ENCODE measurements at regions of chr18 and their contacts with region 1.

Region 1: DNA sequence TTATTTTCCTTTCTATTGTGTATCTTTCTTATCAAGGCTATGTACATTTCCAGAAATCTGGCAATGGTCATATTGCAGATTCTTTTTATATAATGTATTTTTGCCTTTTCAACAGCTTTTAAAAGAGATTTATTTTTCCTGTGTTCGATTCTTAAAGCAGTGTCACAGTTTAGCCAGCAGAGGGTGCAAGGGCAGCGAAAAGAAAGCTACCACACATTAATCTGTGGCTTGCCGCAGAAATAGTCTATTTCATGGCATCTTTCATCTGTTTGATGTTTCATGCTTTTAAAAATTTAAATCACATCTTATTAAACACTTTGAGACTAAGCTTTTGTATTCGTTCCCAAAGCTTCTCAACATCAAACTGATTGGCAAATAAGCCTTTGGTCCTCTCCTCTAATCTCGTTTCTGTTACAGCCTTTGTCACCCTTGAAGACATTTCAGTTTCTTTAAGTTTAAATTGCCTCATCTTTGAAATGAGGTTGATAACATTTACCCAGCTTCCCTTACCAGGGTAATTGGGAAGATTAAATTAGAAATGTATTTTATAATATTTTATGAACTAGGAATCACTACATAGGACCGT is 73.3 kb downstream of the PIK3C3 start:
- DNase-seq: peak; percentile 47
- H3K4me3 ChIP-seq: no peak overlapping the region
- H3K27ac ChIP-seq: no peak overlapping the region
- H3K4me1 ChIP-seq: no peaks in the 10 kb centered on the region
- H3K27me3 ChIP-seq: no peaks in the 10 kb centered on the region
- CTCF ChIP-seq: peak; percentile 67 to 70
- POLR2A ChIP-seq: no peak

Region 2: DNA sequence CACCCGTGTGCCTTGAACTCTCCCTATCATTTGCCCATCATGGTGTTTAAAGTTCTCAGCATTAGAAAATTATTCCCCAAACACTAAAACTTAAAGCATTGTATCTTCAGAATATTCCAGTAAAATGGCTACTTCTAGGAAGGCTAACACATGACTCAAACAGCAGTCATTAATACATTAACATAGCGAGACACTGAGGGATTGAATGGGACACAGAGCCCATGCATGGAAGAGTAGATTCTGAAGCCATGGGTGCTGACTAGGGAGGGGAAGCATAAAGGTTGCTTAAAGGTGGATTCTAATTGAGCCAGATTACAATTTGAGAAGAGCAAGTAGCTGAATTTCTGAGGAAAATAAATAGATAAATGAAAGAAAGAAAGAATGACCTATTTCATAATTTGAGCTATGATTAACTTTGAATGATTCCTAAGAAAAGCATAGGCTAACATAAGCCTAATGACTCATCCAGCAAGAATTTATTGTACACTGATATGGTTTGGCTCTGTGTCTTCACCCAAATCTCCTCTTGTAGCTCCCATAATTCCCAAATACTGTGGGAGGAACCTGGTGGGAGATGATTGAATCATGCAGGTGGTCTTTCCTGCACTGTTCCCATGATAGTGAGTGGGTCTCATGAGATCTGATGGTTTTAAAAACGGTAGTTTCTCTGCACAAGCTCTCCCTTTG is 153.1 kb before region 1 on chr18:
- CTCF ChIA-PET with region 1: no interaction called
- POLR2A ChIA-PET with region 1: no interaction called
- dilution Hi-C with region 1: no loop called
- intact Hi-C with region 1: no loop called
- DNase-seq: no peak
- H3K4me3 ChIP-seq: no peak overlapping the region
- H3K27ac ChIP-seq: no peak overlapping the region
- H3K4me1 ChIP-seq: no peaks in the 10 kb centered on the region
- H3K27me3 ChIP-seq: no peaks in the 10 kb centered on the region
- CTCF ChIP-seq: no peak
- POLR2A ChIP-seq: no peak

Region 3: GRCh38 chr18:41982942-41983660 is 45.2 kb before region 1 on chr18:
- CTCF ChIA-PET with region 1: interaction called, 10 read pairs
- POLR2A ChIA-PET with region 1: no interaction called
- dilution Hi-C with region 1: no loop called
- intact Hi-C with region 1: no loop called
- DNase-seq: peak; percentile 30
- H3K4me3 ChIP-seq: no peak overlapping the region
- H3K27ac ChIP-seq: no peak overlapping the region
- H3K4me1 ChIP-seq: peaks cover 8% of the 10 kb centered on the region
- H3K27me3 ChIP-seq: no peaks in the 10 kb centered on the region
- CTCF ChIP-seq: no peak
- POLR2A ChIP-seq: no peak

Region 4: DNA sequence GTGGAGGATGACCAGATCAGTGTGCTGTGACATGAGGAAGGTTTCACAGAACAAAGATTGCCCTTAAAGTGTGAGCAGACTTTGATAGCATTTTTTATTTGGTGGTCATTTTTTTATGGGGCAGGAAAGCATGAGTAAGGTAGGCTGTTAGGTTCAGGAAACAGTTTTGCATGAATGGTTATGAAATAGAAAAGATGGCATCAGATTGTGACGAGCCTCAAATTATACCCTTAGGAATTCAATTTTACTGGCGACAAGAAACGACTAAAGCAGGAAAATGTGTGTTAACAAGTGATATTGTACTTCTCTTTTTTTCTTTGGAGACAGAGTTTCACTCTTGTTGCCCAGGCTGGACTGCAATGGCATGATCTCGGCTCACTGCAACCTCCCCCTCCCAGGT is 28.6 kb before region 1 on chr18:
- CTCF ChIA-PET with region 1: interaction called, 17 read pairs
- POLR2A ChIA-PET with region 1: no interaction called
- dilution Hi-C with region 1: no loop called
- intact Hi-C with region 1: no loop called
- DNase-seq: no peak
- H3K4me3 ChIP-seq: no peak overlapping the region
- H3K27ac ChIP-seq: no peak overlapping the region
- H3K4me1 ChIP-seq: peaks cover 15% of the 10 kb centered on the region
- H3K27me3 ChIP-seq: no peaks in the 10 kb centered on the region
- CTCF ChIP-seq: no peak
- POLR2A ChIP-seq: no peak

Region 5: DNA sequence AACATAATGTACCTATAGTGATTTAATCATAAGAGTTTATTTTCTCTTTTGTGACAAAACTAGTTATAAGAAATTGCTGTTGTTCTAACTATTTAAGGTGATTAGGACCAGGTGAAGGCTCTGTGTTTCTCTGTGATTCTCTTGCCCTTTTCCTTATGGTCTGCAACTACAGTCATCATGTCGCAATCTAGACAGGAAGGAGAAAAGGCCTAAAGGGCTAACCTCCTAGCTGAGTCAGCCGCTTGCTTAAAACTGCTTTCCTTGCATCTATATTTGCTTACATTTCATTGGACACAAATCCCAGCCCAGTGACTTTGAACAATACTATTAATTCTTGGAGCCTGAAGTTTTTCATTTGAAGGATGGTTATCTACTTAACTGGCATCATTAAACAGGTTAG is 19.8 kb after region 1 on chr18:
- CTCF ChIA-PET with region 1: interaction called, 119 read pairs
- POLR2A ChIA-PET with region 1: no interaction called
- dilution Hi-C with region 1: no loop called
- intact Hi-C with region 1: no loop called
- DNase-seq: peak; percentile 76
- H3K4me3 ChIP-seq: no peak overlapping the region
- H3K27ac ChIP-seq: no peak overlapping the region
- H3K4me1 ChIP-seq: peaks cover 12% of the 10 kb centered on the region
- H3K27me3 ChIP-seq: no peaks in the 10 kb centered on the region
- CTCF ChIP-seq: no peak
- POLR2A ChIP-seq: no peak

Region 6: GRCh38 chr18:43596105-43596712 is 1567.9 kb after region 1 on chr18:
- CTCF ChIA-PET with region 1: interaction called, 14 read pairs
- POLR2A ChIA-PET with region 1: no interaction called
- dilution Hi-C with region 1: no loop called
- intact Hi-C with region 1: no loop called
- DNase-seq: peak; percentile 33
- H3K4me3 ChIP-seq: no peak overlapping the region
- H3K27ac ChIP-seq: no peak overlapping the region
- H3K4me1 ChIP-seq: no peaks in the 10 kb centered on the region
- H3K27me3 ChIP-seq: no peaks in the 10 kb centered on the region
- CTCF ChIP-seq: peak; percentile 15 to 35
- POLR2A ChIP-seq: no peak

Measured in endothelial cell of umbilical vein (primary cell).